Lower leg skin (tissue), 4 donors: ENCODE measurements at regions of chr7 and their contacts with region 1.

Region 1: DNA sequence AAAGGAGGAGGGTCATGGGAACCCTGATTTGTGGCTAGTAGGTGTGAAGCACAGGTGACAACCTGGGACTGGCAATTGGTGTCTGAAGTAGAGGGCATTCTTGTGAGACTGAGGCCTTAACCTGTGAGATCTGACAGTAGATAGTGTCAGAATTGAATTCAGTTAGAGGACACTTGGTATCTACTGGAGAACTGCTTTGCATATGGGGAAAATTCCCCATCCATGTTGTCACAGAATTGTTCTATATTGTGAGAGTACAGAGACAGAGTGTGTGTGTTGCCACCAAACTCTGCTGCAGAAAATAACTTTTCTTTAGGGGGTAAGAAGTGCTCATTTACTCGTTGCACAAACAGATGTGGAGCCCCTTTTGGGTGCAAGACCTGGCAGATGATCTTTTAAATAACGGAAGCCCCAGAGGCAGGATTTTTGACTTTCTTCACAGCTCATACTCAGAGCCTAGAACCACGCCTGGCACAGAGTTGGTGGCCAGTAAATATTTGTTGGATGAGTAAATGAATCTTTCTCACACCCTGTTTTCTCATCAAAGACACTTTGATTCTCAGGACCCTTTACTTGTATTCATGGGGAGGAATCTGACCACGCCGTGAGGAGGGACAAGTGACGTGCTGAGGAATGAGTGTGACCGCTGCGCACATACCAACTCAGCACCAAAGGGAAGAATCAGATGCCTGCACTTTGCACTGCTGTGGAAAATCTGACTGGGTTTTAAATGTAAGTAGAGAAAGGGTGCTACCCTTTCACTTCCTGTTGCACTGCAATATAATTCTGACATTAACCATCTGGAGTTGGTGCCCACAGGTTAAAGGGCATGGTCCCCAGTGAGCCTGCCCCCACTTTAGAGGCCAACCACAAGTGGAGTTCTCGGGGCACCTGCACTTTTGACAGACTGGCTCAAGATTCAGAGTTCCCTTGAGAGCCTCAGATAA is 39.2 kb upstream of the SDHAF3 start:
- DNase-seq: no peak
- H3K4me3 ChIP-seq: no peak overlapping the region
- CTCF ChIP-seq: no peak
- POLR2A ChIP-seq: no peak

Region 2: DNA sequence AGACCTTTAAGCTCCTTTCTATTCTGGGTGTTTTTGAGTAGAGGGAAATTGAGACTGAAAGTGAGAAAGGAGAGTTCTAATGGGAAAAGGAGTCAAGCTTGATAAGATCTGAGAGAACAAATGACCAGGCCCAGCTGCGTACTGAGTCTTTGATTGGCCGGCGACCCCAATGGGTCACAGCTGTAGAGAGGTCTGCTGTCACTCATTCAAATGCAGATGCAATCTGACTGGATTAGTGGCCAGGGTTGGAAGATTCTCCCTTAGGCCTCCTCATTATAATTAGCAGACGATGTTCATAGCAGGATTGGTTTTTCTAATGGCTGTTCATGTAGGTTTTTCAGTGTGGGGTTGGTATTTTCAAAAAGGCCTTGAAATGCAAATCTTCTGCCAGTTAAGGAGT is 629.2 kb before region 1 on chr7:
- intact Hi-C with region 1: no loop called
- DNase-seq: no peak
- H3K4me3 ChIP-seq: no peak overlapping the region
- CTCF ChIP-seq: no peak
- POLR2A ChIP-seq: no peak

Region 3: GRCh38 chr7:97043281-97043680 is 35.0 kb before region 1 on chr7:
- intact Hi-C with region 1: no loop called
- DNase-seq: no peak
- H3K4me3 ChIP-seq: no peak overlapping the region
- CTCF ChIP-seq: no peak
- POLR2A ChIP-seq: no peak

Region 4: DNA sequence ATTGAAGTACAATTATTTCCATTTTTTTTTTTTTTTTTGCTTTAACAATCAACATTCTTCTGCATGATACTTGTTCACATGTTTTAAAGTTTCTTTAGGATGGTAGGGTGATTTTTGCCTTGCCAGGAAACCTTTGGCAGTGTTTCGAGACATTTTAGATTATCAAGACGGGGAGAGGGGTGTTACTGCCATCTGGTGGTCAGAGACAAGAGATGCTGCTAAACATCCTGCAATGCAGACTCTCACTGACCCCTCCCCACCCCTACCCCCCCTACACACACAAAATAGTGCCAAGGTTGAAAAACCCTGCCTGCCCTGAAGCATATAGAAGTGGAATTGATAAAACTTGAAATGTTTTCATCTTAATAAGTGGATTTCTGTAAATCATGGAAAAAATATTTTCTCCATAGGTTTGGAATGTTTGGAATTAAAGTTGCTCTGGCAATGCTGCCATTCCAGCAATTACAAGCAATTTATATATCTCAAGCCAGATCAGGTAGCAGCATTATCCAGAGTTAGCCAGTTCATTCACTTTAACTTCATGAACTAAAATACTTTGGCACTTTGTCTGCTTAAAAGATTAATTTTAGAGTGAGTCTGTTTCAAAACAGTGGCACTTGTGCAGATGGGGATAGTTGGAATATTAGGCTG is 101.3 kb after region 1 on chr7:
- intact Hi-C with region 1: no loop called
- DNase-seq: no peak
- H3K4me3 ChIP-seq: no peak overlapping the region
- CTCF ChIP-seq: no peak
- POLR2A ChIP-seq: no peak

Region 5: GRCh38 chr7:97418312-97418711 is 340.0 kb after region 1 on chr7:
- intact Hi-C with region 1: loop called (anchors 10 kb)
- DNase-seq: no peak
- H3K4me3 ChIP-seq: no peak overlapping the region
- CTCF ChIP-seq: no peak
- POLR2A ChIP-seq: no peak